Transverse colon (tissue), 4 donors: ENCODE measurements at regions of chrX and their contacts with region 1.

Region 1: GRCh38 chrX:4059893-4060292 is 346.4 kb upstream of the PRKX start:
- DNase-seq: no peak
- H3K4me3 ChIP-seq: no peak overlapping the region
- H3K27ac ChIP-seq: no peak overlapping the region
- H3K4me1 ChIP-seq: no peaks in the 10 kb centered on the region
- H3K27me3 ChIP-seq: no peaks in the 10 kb centered on the region
- CTCF ChIP-seq: no peak
- EP300 ChIP-seq: no peak
- POLR2A ChIP-seq: no peak

Region 2: GRCh38 chrX:2577844-2578506 is 1481.9 kb before region 1 on chrX:
- in situ Hi-C with region 1: no loop called
- intact Hi-C with region 1: no loop called
- DNase-seq: no peak
- H3K4me3 ChIP-seq: no peak overlapping the region
- H3K27ac ChIP-seq: no peak overlapping the region
- H3K4me1 ChIP-seq: no peaks in the 10 kb centered on the region
- H3K27me3 ChIP-seq: peaks cover 25% of the 10 kb centered on the region
- CTCF ChIP-seq: no peak
- EP300 ChIP-seq: no peak
- POLR2A ChIP-seq: no peak

Region 3: DNA sequence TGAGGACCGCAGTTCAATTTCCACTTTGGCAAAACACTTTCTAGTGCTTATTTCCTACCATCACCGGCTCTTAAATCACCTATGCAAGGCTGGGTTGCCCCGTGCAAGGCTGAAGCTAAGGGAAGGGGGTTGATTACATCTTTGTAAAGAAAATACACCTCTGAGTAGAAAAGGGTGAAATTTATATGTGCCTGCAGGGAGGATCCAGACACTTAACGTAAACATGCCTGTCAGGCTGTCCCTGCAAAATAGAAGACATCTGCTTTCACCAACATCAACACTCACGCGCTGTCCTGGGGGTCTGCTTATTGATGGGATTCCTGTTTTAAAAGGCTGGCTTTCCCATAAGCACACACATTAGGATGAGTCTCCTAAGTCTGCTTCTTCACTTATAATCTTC is 438.5 kb before region 1 on chrX:
- in situ Hi-C with region 1: no loop called
- intact Hi-C with region 1: loop called (anchors 5 kb)
- DNase-seq: no peak
- H3K4me3 ChIP-seq: no peak overlapping the region
- H3K27ac ChIP-seq: no peak overlapping the region
- H3K4me1 ChIP-seq: no peaks in the 10 kb centered on the region
- H3K27me3 ChIP-seq: no peaks in the 10 kb centered on the region
- CTCF ChIP-seq: no peak
- EP300 ChIP-seq: no peak
- POLR2A ChIP-seq: no peak